ENCODE measurements at regions of chr4 and their contacts with region 1.

Region 1: DNA sequence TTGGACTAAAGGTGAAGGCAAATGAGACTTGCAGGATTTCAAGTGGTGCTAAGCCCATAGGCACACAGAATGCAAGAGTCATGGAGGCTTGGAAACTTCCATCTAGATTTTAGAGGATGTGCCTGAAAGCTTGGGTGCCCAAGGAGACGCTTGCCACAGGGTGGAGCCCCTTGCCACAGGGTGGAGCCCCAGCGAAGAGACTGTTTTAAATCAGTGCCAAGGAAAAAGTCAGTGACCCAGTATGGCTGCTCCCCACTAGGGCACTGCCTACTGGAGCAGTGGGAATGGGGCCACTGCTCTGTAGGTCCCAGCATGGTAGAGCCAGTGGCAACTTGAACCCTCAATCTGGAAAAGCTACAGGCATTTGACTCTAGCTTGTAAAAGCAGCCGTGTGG is 794.2 kb upstream of the LCORL start:
- DNase-seq: no peak
- ATAC-seq: no peak
- H3K4me3 ChIP-seq: no peak overlapping the region
- H3K27ac ChIP-seq: no peak overlapping the region
- H3K4me1 ChIP-seq: no peaks in the 10 kb centered on the region
- H3K27me3 ChIP-seq: no peaks in the 10 kb centered on the region
- CTCF ChIP-seq: no peak
- POLR2A ChIP-seq: no peak
- RAD21 ChIP-seq: no peak

Region 2: DNA sequence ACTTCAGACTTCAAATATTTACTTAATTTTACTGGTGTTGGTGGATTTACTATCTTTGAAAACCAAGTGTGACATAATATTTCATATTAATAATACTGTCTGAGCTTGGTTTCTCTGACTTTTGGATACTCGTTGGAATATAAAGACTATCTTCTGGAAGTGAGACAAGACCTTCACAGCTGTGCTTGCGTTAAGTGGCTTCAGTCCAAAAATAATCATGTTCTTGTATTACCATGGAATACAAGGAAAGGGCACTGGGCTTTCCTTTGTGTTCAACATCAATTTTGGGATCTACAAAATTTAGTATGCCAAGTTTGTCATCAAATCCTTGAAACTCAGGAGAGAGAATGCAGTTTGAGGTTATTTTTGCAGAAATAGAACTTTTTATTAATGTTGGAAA is 81.8 kb before region 1 on chr4:
- CTCF ChIA-PET with region 1: no interaction called
- POLR2A ChIA-PET with region 1: no interaction called
- dilution Hi-C with region 1: no loop called
- in situ Hi-C with region 1: no loop called
- intact Hi-C with region 1: no loop called
- DNase-seq: no peak
- ATAC-seq: no peak
- H3K4me3 ChIP-seq: no peak overlapping the region
- H3K27ac ChIP-seq: no peak overlapping the region
- H3K4me1 ChIP-seq: no peaks in the 10 kb centered on the region
- H3K27me3 ChIP-seq: no peaks in the 10 kb centered on the region
- CTCF ChIP-seq: no peak
- POLR2A ChIP-seq: no peak
- RAD21 ChIP-seq: no peak

Region 3: DNA sequence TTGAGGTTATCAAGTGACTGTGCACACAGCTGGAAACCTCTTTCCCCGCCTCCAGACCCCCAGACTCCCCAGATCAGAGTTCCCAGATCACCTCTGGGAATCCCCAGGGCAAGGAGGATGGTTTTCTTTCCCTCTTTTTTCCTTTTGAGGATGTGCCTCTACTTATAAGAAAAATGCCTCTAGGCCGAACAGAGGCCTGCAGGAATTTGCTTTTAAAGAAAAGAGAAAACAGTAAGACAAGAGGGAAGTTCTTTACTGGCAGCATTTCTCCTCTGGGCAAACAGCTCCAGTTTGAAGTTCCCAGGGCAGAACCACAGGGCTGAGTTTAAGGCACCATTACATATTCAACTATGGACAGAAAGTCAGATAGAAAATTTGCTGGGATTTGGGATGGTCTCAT is 43.7 kb after region 1 on chr4:
- CTCF ChIA-PET with region 1: no interaction called
- POLR2A ChIA-PET with region 1: no interaction called
- dilution Hi-C with region 1: no loop called
- in situ Hi-C with region 1: no loop called
- intact Hi-C with region 1: no loop called
- DNase-seq: no peak
- ATAC-seq: no peak
- H3K4me3 ChIP-seq: no peak overlapping the region
- H3K27ac ChIP-seq: no peak overlapping the region
- H3K4me1 ChIP-seq: no peaks in the 10 kb centered on the region
- H3K27me3 ChIP-seq: no peaks in the 10 kb centered on the region
- CTCF ChIP-seq: no peak
- POLR2A ChIP-seq: no peak
- RAD21 ChIP-seq: no peak

Region 4: GRCh38 chr4:18923496-18924161 is 107.9 kb after region 1 on chr4:
- CTCF ChIA-PET with region 1: no interaction called
- POLR2A ChIA-PET with region 1: no interaction called
- dilution Hi-C with region 1: no loop called
- in situ Hi-C with region 1: no loop called
- intact Hi-C with region 1: loop called (anchors 10 kb)
- DNase-seq: no peak
- ATAC-seq: no peak
- H3K4me3 ChIP-seq: no peak overlapping the region
- H3K27ac ChIP-seq: no peak overlapping the region
- H3K4me1 ChIP-seq: no peaks in the 10 kb centered on the region
- H3K27me3 ChIP-seq: no peaks in the 10 kb centered on the region
- CTCF ChIP-seq: no peak
- POLR2A ChIP-seq: no peak
- RAD21 ChIP-seq: no peak

Region 5: DNA sequence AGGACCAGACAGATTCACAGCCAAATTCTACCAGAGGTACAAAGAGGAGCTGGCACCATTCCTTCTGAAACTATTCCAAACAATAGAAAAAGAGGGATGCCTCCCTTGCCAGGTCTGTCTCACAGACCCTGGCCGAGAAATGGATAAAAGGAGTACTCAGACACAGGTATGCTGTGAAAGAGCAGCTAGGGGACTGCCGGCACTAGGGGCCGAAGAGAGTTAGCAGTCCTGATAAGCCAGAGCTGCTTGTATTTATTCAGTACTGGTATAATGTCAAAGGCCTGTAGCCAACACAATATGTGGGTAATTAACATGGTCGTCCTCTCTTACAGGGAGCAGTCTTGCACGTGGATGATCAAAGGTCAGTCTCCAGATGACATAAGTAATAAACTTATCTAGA is 247.9 kb after region 1 on chr4:
- CTCF ChIA-PET with region 1: no interaction called
- POLR2A ChIA-PET with region 1: no interaction called
- dilution Hi-C with region 1: no loop called
- in situ Hi-C with region 1: no loop called
- intact Hi-C with region 1: loop called (anchors 10 kb)
- DNase-seq: no peak
- ATAC-seq: no peak
- H3K4me3 ChIP-seq: no peak overlapping the region
- H3K27ac ChIP-seq: no peak overlapping the region
- H3K4me1 ChIP-seq: no peaks in the 10 kb centered on the region
- H3K27me3 ChIP-seq: no peaks in the 10 kb centered on the region
- CTCF ChIP-seq: no peak
- POLR2A ChIP-seq: no peak
- RAD21 ChIP-seq: no peak